WTC11 (cell line): ENCODE measurements at regions of chr17 and their contacts with region 1.

Region 1: GRCh38 chr17:50094753-50095619 is at the start of gene PDK2:
- DNase-seq: peak; percentile 95
- ATAC-seq: peak; percentile 93
- H3K4me3 Mint-ChIP-seq: peak within 1 kb of the TSS; percentile 97
- H3K27ac Mint-ChIP-seq: peak within 1 kb of the TSS; percentile 41
- H3K4me1 Mint-ChIP-seq: peaks cover 6% of the 10 kb centered on the region
- H3K27me3 Mint-ChIP-seq: no peaks in the 10 kb centered on the region
- CTCF ChIP-seq: no peak
- total RNA-seq, gene PDK2: 16.6 to 21.3 TPM (median 19.8 TPM) in 3 replicates

Region 2: GRCh38 chr17:49585422-49586027 is 509.5 kb before region 1 on chr17:
- CTCF ChIA-PET with region 1: no interaction called
- POLR2A ChIA-PET with region 1: no interaction called
- DNase-seq: peak; percentile 74
- ATAC-seq: peak; percentile 98
- H3K4me3 Mint-ChIP-seq: no peak overlapping the region
- H3K27ac Mint-ChIP-seq: no peak overlapping the region
- H3K4me1 Mint-ChIP-seq: no peaks in the 10 kb centered on the region; the same call in none of the 2 replicates
- H3K27me3 Mint-ChIP-seq: no peaks in the 10 kb centered on the region; the same call in 1 of the 2 replicates
- CTCF ChIP-seq: no peak

Region 3: DNA sequence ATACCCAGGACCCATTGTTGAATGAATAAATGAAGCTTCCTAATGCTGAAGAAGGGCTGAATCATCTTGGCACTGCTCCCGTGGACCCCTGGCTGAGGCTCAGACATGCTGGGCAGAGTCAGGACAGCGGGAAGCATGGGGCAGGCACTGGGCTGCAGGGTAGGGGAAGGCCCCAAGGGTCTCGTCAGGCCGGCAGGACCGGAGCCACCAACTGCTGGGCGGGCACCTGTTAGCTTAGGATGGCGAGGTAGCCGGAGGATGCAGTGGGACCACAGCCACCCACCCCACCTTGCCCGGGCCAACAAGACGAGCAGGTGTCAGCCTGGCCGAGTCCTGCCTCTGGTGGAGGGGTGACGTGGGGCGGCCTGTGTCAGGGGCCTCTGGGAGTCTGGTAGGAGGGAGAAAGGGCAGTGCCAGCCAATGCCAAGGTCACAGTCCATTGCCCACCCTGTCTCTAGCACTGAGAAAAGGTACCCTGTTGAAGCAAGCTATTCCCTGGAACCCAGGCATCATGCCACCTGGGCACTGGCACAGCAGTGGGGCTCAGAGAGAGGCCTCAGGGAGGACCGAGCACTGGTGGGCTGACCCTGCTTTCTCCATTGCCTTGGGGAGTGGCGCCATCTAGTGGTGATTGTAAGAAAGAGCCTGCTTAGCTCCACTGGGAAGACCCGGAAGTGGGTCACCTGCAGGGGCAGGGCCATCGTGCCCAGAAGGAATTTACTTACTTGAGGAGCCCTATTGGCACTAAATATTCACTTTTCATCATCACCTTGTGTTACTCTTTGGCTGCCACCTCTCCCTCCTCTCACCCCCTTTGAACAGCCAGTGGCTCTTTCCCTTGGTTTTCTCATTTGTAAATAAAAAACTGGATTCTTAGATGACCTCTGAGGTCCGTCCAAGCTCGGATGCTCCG is 96.9 kb before region 1 on chr17:
- CTCF ChIA-PET with region 1: interaction called, 21 read pairs
- POLR2A ChIA-PET with region 1: no interaction called
- DNase-seq: peak; percentile 88
- ATAC-seq: peak; percentile 61
- H3K4me3 Mint-ChIP-seq: peak overlapping the region; percentile 65
- H3K27ac Mint-ChIP-seq: no peak overlapping the region
- H3K4me1 Mint-ChIP-seq: peaks cover 29% of the 10 kb centered on the region
- H3K27me3 Mint-ChIP-seq: peaks cover 86% of the 10 kb centered on the region
- CTCF ChIP-seq: peak; percentile 98

Region 4: GRCh38 chr17:50037321-50038071 is 57.5 kb before region 1 on chr17:
- CTCF ChIA-PET with region 1: interaction called, 13 read pairs
- POLR2A ChIA-PET with region 1: no interaction called
- DNase-seq: no peak
- ATAC-seq: peak; percentile 23
- H3K4me3 Mint-ChIP-seq: no peak overlapping the region
- H3K27ac Mint-ChIP-seq: no peak overlapping the region
- H3K4me1 Mint-ChIP-seq: peaks cover 11% of the 10 kb centered on the region
- H3K27me3 Mint-ChIP-seq: peaks cover 5% of the 10 kb centered on the region
- CTCF ChIP-seq: no peak

Region 5: GRCh38 chr17:50079334-50080095 is 15.5 kb before region 1 on chr17:
- CTCF ChIA-PET with region 1: interaction called, 62 read pairs
- POLR2A ChIA-PET with region 1: interaction called, 7 read pairs
- DNase-seq: peak; percentile 86
- ATAC-seq: peak; percentile 83
- H3K4me3 Mint-ChIP-seq: no peak overlapping the region
- H3K27ac Mint-ChIP-seq: no peak overlapping the region
- H3K4me1 Mint-ChIP-seq: peaks cover 11% of the 10 kb centered on the region
- H3K27me3 Mint-ChIP-seq: no peaks in the 10 kb centered on the region
- CTCF ChIP-seq: peak; percentile 53; the same call in 1 of the 2 replicates

Region 6: GRCh38 chr17:50129728-50130558 is 35.0 kb after region 1 on chr17 and contains the start of gene SAMD14:
- CTCF ChIA-PET with region 1: interaction called, 16 read pairs
- POLR2A ChIA-PET with region 1: no interaction called
- DNase-seq: no peak
- ATAC-seq: peak; percentile 16
- H3K4me3 Mint-ChIP-seq: peak within 1 kb of the TSS; percentile 97
- H3K27ac Mint-ChIP-seq: no peak within 1 kb of the TSS
- H3K4me1 Mint-ChIP-seq: peaks cover 48% of the 10 kb centered on the region
- H3K27me3 Mint-ChIP-seq: peaks cover 26% of the 10 kb centered on the region
- CTCF ChIP-seq: no peak
- total RNA-seq, gene SAMD14: 4.5 to 6.0 TPM (median 5.9 TPM) in 3 replicates

Region 7: GRCh38 chr17:50161023-50161910 is 66.3 kb after region 1 on chr17:
- CTCF ChIA-PET with region 1: interaction called, 28 read pairs
- POLR2A ChIA-PET with region 1: no interaction called
- DNase-seq: peak; percentile 96
- ATAC-seq: peak; percentile 92
- H3K4me3 Mint-ChIP-seq: peak overlapping the region; percentile 79
- H3K27ac Mint-ChIP-seq: peak overlapping the region; percentile 51
- H3K4me1 Mint-ChIP-seq: peaks cover 10% of the 10 kb centered on the region
- H3K27me3 Mint-ChIP-seq: peaks cover 33% of the 10 kb centered on the region
- CTCF ChIP-seq: peak; percentile 64

Region 8: GRCh38 chr17:50297407-50297865 is 202.4 kb after region 1 on chr17:
- CTCF ChIA-PET with region 1: interaction called, 10 read pairs
- POLR2A ChIA-PET with region 1: no interaction called
- DNase-seq: peak; percentile 91
- ATAC-seq: peak; percentile 94
- H3K4me3 Mint-ChIP-seq: no peak overlapping the region
- H3K27ac Mint-ChIP-seq: no peak overlapping the region
- H3K4me1 Mint-ChIP-seq: peaks cover 11% of the 10 kb centered on the region
- H3K27me3 Mint-ChIP-seq: peaks cover 7% of the 10 kb centered on the region
- CTCF ChIP-seq: peak; percentile 92